HCT116 (cell line): ENCODE measurements at regions of chr6 and their contacts with region 1.

Region 1: DNA sequence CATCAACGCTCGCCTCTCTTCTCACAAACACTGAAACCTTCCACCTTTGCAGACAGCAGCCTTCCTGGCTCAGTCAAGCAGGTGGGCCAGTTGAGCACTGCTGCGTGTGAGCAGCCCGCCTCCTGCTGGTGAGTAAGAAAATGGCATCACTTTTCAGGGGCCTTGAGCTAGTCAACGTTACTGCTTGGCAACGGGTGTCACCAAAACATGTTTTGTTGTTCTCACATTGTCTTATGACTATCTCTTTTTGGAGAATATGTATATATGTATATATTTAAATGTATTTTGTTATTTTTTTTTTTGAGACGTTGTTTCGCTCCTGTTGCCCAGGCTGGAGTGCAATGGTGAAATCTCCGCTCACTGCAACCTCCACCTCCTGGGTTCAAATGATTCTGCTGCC is 97.0 kb upstream of the AGPAT4 start:
- DNase-seq: peak; percentile 64
- ATAC-seq: peak; percentile 79
- H3K4me3 ChIP-seq: no peak overlapping the region
- H3K27ac ChIP-seq: no peak overlapping the region
- H3K4me1 ChIP-seq: peaks cover 0 to 19% of the 10 kb centered on the region in 2 experiments; a peak in 1 of 4 replicates
- H3K27me3 ChIP-seq: no peaks in the 10 kb centered on the region
- CTCF ChIP-seq: peak; percentile 78 to 92 (median 90)
- POLR2A ChIP-seq: no peak
- RAD21 ChIP-seq: peak; percentile 99

Region 2: DNA sequence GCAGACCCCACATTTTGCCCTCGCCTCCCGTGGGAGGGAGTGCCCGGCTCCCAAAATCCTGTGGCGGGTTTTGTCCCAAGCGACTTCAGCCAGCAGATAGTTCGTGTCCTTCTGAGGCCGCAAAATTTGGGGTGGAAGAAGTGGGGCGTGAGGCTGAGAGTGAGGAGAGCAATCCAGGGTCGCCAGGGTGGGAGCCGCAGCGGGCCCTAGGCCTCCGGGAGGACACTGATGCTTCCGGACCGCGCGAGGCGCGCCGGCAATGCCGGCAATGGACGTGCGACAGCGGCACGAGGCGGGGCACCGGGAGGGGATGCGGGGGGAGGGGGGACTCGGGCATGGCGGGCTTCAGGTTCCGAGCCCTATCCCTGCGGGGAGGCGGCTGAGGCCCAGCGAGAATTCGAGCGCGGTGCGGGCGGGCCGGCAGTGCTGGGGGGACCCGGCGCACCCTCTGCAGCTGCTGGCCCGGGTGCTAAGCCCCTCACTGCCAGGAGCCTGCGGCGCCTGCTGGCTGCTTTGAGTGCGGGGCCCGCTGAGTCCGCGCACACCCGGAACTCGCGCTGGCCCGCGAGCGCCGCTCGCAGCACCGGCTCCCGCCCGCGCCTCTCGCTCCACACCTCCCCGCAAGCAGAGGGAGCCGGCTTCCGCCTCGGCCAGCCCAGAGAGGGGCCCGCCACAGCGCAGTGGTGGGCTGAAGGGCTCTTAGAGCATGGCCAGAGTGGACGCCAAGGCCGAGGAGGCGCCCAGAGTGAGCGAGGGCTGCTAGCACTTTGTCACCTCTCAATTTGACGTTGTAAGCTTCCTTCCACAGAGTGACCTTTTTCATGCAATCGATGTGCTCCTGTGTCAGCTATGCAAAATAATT is 850.6 kb before region 1 on chr6:
- CTCF ChIA-PET with region 1: no interaction called
- POLR2A ChIA-PET with region 1: no interaction called
- RAD21 ChIA-PET with region 1: no interaction called
- intact Hi-C with region 1: loop called (anchors 2 kb)
- DNase-seq: no peak
- ATAC-seq: peak; percentile 52
- H3K4me3 ChIP-seq: no peak overlapping the region
- H3K27ac ChIP-seq: no peak overlapping the region
- H3K4me1 ChIP-seq: no peaks in the 10 kb centered on the region
- H3K27me3 ChIP-seq: 0 out of 2 replicates have a peak, but pooled peaks cover 3% of the 10 kb centered on the region
- CTCF ChIP-seq: peak in 2 of 3 experiments; percentile 67 to 91; a peak in 2 of 6 replicates
- POLR2A ChIP-seq: no peak
- RAD21 ChIP-seq: peak; percentile 77

Region 3: DNA sequence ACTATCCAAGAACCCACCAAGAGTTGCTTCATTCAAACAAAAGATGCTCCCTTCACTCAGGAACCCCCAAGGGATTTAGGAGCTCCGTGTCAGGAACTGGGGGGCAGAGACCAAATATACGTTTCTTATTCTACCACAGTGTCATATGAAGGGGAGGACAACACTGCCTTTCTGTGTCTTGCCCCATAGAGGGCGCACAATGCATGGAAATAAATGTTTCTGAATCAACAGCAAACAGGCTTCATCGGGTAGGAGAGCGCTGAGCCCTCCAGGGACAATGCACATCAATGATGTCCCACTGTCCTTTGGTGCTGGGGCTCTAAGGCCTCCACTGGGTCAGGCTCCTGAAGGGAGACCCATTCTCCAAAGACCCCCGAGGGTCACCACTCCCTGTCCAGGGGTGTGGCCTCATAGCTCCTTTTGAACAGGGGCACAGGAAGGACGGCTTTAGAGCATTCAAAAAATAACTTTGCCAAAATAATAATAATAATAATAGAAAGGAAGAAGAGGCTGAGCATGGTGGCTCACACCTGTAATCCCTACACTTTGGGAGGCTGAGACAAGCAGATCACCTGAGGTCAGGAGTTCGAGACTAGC is 637.7 kb before region 1 on chr6:
- CTCF ChIA-PET with region 1: interaction called, 13 read pairs
- POLR2A ChIA-PET with region 1: interaction called, 3 read pairs
- RAD21 ChIA-PET with region 1: interaction called in 1 of 2 experiments, 5 read pairs
- intact Hi-C with region 1: loop called (anchors 1 kb)
- DNase-seq: peak; percentile 28
- ATAC-seq: peak; percentile 93
- H3K4me3 ChIP-seq: no peak overlapping the region
- H3K27ac ChIP-seq: no peak overlapping the region
- H3K4me1 ChIP-seq: peaks cover 0 to 9% of the 10 kb centered on the region in 2 experiments; a peak in 1 of 4 replicates
- H3K27me3 ChIP-seq: no peaks in the 10 kb centered on the region
- CTCF ChIP-seq: peak; percentile 56 to 79 (median 76); a peak in 5 of 6 replicates
- POLR2A ChIP-seq: no peak
- RAD21 ChIP-seq: peak; percentile 76

Region 4: GRCh38 chr6:160930547-160931377 is 440.1 kb before region 1 on chr6:
- CTCF ChIA-PET with region 1: interaction called, 24 read pairs
- POLR2A ChIA-PET with region 1: interaction called, 3 read pairs
- RAD21 ChIA-PET with region 1: interaction called, 5 to 7 read pairs
- intact Hi-C with region 1: loop called (anchors 1 kb)
- DNase-seq: peak; percentile 23
- ATAC-seq: peak; percentile 97
- H3K4me3 ChIP-seq: no peak overlapping the region
- H3K27ac ChIP-seq: no peak overlapping the region
- H3K4me1 ChIP-seq: no peaks in the 10 kb centered on the region
- H3K27me3 ChIP-seq: no peaks in the 10 kb centered on the region
- CTCF ChIP-seq: peak; percentile 64 to 84 (median 78)
- POLR2A ChIP-seq: no peak
- RAD21 ChIP-seq: peak; percentile 90

Region 5: DNA sequence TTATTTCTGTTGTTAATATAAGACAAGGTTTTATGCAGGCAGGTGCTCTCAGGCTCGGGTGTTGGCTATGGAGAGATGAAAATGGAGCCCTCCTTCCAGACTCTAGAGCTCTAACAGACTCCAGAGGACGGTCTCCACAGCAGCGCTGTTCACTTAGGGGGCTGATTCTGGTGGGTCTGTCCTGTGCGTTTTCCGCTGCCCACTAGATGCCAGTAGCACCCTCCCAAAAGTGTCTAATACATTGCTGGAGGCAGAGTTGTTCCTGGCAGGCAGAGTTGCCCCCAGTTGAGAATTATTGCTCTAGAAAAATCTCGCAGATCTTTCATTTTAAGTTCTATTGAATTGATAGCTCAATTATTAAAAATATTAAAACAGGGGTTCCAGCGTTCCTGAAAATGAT is 269.4 kb before region 1 on chr6:
- CTCF ChIA-PET with region 1: interaction called, 13 read pairs
- POLR2A ChIA-PET with region 1: no interaction called
- RAD21 ChIA-PET with region 1: no interaction called
- intact Hi-C with region 1: loop called (anchors 2 kb)
- DNase-seq: no peak
- ATAC-seq: peak; percentile 59; the same call in 1 of the 2 replicates
- H3K4me3 ChIP-seq: no peak overlapping the region
- H3K27ac ChIP-seq: no peak overlapping the region
- H3K4me1 ChIP-seq: no peaks in the 10 kb centered on the region
- H3K27me3 ChIP-seq: no peaks in the 10 kb centered on the region
- CTCF ChIP-seq: peak; percentile 14 to 40 (median 36); a peak in 4 of 6 replicates
- POLR2A ChIP-seq: no peak
- RAD21 ChIP-seq: peak; percentile 51

Region 6: GRCh38 chr6:161235776-161236633 is 134.9 kb before region 1 on chr6:
- CTCF ChIA-PET with region 1: no interaction called
- POLR2A ChIA-PET with region 1: no interaction called
- RAD21 ChIA-PET with region 1: no interaction called
- intact Hi-C with region 1: loop called (anchors 5 kb)
- DNase-seq: no peak
- ATAC-seq: no peak
- H3K4me3 ChIP-seq: no peak overlapping the region
- H3K27ac ChIP-seq: no peak overlapping the region
- H3K4me1 ChIP-seq: peaks cover 0 to 16% of the 10 kb centered on the region in 2 experiments; a peak in 2 of 4 replicates
- H3K27me3 ChIP-seq: no peaks in the 10 kb centered on the region
- CTCF ChIP-seq: no peak
- POLR2A ChIP-seq: no peak
- RAD21 ChIP-seq: no peak

Region 7: GRCh38 chr6:161303628-161304340 is 67.1 kb before region 1 on chr6:
- CTCF ChIA-PET with region 1: no interaction called
- POLR2A ChIA-PET with region 1: no interaction called
- RAD21 ChIA-PET with region 1: no interaction called
- intact Hi-C with region 1: no loop called
- DNase-seq: no peak
- ATAC-seq: peak; percentile 72
- H3K4me3 ChIP-seq: no peak overlapping the region; a peak in 1 of 4 replicates
- H3K27ac ChIP-seq: peak overlapping the region; percentile 37; the same call in 1 of the 2 replicates
- H3K4me1 ChIP-seq: peaks cover 5 to 28% of the 10 kb centered on the region in 2 experiments
- H3K27me3 ChIP-seq: no peaks in the 10 kb centered on the region
- CTCF ChIP-seq: no peak
- POLR2A ChIP-seq: no peak
- RAD21 ChIP-seq: no peak; the same call in 1 of the 2 replicates

Region 8: DNA sequence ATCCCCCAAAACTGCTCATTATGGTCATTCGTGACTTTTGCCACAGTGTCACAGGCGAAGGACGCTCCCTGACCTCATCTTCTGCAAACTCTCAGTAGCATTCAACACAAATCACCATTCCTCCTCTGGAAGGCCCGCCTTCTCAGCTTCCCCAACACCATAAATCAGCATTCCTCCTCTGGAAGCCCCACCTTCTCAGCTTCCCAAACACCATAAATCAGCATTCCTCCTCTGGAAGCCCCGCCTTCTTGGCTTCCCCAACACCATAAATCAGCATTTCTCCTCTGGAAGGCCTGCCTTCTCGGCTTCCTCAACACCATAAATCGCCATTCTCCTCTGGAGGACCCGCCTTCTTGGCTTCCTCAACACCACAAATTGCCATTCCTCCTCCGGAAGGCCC is 191.0 kb after region 1 on chr6:
- CTCF ChIA-PET with region 1: no interaction called
- POLR2A ChIA-PET with region 1: no interaction called
- RAD21 ChIA-PET with region 1: no interaction called
- intact Hi-C with region 1: no loop called
- DNase-seq: no peak
- ATAC-seq: no peak
- H3K4me3 ChIP-seq: no peak overlapping the region
- H3K27ac ChIP-seq: no peak overlapping the region
- H3K4me1 ChIP-seq: no peaks in the 10 kb centered on the region
- H3K27me3 ChIP-seq: peaks cover 28% of the 10 kb centered on the region
- CTCF ChIP-seq: no peak
- POLR2A ChIP-seq: no peak
- RAD21 ChIP-seq: no peak